Posterior cingulate gyrus (tissue), 11 donors: ENCODE measurements at regions of chr10 and their contacts with region 1.

Region 1: DNA sequence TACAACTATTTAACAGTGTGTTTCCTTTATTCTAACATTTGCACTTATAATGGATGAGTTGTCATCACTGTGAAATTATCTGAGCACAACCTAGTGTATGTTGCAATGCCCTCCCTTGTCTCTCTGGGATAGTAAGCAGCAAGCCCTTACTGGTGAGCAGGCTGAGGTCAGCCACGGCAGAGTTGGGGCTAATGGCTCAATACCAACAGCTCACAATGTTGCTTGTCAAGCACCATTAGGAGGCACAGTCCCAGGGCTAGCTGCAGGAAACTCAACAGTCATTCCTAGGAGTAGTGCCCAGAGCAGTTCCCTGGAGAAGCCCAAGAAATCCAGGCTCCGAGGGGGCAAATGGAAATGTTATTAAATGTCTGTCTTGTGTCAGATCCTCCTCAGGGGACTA is 858.4 kb downstream of the GRID1 start:
- DNase-seq: no peak

Region 2: DNA sequence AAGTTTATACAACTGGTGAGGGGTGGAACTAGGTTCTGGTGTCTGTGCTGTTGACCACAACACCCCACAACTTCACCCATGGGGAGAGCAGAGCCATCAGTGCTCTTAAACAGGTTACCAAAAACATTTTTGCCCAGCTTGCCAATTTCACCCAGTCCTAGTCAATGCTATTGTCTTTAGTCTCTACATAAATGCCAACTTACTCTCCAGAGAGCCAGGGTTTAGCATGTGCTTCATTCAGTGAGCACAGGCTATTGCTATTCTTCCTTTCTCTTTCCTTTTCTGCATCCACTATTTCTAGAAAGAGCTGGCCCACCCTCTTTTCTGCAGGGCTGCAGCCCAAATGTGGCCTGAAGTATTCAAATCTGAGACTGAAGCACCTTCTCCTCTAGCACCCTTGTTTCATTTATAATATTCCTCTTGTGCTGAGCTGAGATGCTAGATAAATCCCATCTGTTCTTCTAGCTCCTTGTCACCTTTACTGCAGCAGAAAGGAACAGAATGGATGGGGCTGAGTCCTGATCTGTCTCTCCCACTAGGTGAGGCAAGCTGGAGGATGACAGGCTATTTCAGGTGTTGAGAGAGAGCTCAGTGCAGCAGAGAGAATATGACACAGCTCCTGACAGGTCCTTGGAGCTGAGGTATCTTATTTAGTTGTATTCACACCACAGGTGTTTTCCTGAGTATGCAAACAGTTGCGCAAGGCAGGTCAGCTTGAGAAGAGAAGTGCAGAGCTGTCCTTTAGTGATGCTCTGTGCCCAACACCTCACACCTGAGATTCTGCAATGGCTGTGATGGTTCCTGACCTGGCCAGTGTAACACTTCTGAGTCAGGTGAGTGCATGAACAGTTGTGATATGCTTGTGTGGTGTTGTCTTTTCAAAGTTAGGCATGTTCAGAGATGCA is 360.6 kb before region 1 on chr10:
- intact Hi-C with region 1: no loop called
- DNase-seq: no peak

Region 3: DNA sequence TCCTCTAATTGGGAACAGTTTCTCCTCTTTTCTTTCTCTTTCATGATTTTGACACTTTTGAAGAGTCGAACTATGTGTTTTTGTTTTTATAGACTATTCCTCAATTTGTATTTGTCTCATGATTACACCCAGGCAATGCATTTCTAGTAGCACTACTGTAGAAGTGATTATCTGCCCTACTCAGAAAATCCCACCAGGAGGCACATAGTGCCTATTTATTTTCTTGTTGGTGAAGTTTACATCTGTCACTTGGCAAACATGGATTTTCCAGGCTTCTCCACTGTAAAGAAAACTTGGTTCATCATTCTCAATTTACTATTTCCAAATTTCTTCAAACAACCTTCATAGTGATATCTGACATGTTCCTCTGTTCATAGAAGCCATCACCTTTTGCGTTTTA is 285.9 kb before region 1 on chr10:
- intact Hi-C with region 1: loop called (anchors 5 kb)
- DNase-seq: no peak